ENCODE measurements at regions of chr5 and their contacts with region 1.

Region 1: DNA sequence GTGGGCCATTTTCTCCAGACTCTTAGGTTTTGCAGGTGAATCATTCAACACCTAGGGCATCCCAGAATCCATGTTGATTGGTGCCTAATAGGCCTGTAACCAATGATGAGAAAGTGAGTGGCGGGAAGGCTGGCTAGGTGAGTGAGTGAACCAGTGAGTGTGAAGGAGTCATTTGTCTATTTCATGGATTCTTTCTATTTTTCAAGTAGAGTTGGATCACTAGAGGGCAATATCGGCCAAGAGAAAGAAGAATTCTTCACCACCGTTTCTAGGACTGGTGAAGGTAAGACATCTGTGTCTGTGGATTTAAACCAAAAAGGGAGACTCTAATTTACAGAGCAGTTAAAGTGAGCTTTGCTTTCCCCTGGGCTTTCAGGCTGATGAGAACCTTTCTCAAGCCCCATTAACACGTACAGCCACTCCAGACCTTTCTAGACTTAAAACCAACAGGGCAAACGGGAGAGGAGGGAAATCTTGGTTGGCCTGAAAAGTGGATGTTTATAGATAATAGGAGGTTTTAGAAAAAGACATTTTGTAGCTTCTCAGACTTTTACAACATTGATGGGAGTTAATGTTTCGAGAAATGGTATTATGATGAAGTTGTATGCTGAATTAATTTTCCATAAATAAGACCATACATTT is 114.3 kb upstream of the IL12B start:
- DNase-seq: no peak
- ATAC-seq: peak; percentile 76 to 92 (median 84)
- H3K4me3 ChIP-seq: no peak overlapping the region
- H3K27ac ChIP-seq: no peak overlapping the region
- H3K4me1 ChIP-seq: no peaks in the 10 kb centered on the region
- H3K27me3 ChIP-seq: no peaks in the 10 kb centered on the region
- CTCF ChIP-seq: peak; percentile 48 to 64 (median 50)
- POLR2A ChIP-seq: no peak

Region 2: GRCh38 chr5:158695595-158696330 is 748.8 kb before region 1 on chr5:
- intact Hi-C with region 1: no loop called
- DNase-seq: peak; percentile 62 to 79 (median 78)
- ATAC-seq: peak; percentile 94 to 97 (median 96)
- H3K4me3 ChIP-seq: no peak overlapping the region
- H3K27ac ChIP-seq: no peak overlapping the region
- H3K4me1 ChIP-seq: peaks cover 0 to 16% (median 0%) of the 10 kb centered on the region in 4 donors
- H3K27me3 ChIP-seq: no peaks in the 10 kb centered on the region
- CTCF ChIP-seq: peak; percentile 95 to 97 (median 96)
- POLR2A ChIP-seq: no peak

Region 3: DNA sequence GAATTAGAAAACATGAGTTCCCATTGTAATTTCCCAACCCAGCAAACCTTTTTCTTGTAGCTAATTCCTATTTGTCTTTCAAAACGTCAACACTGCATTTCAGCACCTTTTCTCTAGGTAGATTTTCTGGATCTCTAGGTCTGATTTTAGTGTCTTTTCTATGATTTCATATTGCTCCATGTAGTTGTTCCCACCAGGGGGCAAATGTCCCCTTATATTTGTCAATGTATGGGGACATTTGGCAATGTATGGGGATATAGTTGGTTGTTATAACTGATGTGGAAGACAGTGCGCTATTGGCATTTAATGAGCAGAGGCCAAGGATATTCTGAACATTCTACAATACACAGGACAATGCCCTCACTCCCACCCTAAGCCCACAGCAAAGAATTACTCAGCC is 197.8 kb after region 1 on chr5:
- intact Hi-C with region 1: no loop called
- DNase-seq: no peak
- ATAC-seq: no peak
- H3K4me3 ChIP-seq: no peak overlapping the region
- H3K27ac ChIP-seq: no peak overlapping the region
- H3K4me1 ChIP-seq: no peaks in the 10 kb centered on the region
- H3K27me3 ChIP-seq: no peaks in the 10 kb centered on the region
- CTCF ChIP-seq: no peak
- POLR2A ChIP-seq: no peak

Region 4: DNA sequence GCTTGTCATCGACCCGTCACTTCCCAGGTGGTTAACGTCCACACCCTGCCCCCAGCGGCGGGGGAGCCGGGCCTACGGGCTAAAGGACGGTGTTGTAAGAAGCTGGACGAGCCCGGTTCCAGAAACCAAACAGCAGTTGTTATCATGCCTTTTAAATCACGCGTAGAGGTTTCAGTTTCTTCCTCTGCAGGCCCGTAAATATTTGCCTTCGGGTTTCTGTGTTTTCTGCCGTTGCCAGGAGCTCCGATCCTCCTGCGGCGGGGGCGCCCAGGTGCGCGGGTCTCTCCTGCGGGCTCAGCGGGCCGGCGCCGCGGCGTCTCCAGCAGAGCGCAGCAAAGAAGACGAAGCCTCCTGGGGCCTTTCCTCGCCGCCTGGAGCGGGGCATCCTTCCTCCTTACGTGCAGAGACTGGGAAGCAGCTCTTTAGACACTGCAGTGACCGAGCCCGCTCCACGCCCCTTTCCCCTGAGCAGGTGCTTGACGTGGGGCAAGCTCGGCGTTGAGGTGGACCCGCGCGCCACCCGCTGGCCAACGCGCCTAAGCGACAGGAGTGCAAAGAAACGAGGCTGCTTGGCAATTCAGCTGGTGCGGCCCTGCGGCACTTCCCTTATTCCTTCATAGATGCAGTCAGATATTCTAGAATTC is 542.6 kb after region 1 on chr5:
- intact Hi-C with region 1: loop called (anchors 5 kb)
- DNase-seq: peak; percentile 87 to 89 (median 88)
- ATAC-seq: peak; percentile 99 to 100 (median 99)
- H3K4me3 ChIP-seq: peak overlapping the region; percentile 48 to 56 (median 53)
- H3K27ac ChIP-seq: peak overlapping the region in 1 of 3 donors; percentile 23
- H3K4me1 ChIP-seq: no peaks in the 10 kb centered on the region
- H3K27me3 ChIP-seq: no peaks in the 10 kb centered on the region
- CTCF ChIP-seq: peak; percentile 78 to 89 (median 87)
- POLR2A ChIP-seq: no peak